ENCODE measurements at regions of chr3 and their contacts with region 1.

Region 1: GRCh38 chr3:156674046-156674910 is at the start of gene TIPARP:
- DNase-seq: peak; percentile 92
- ATAC-seq: peak; percentile 92
- H3K4me3 ChIP-seq: peak within 1 kb of the TSS; percentile 76 to 96 (median 82)
- H3K27ac ChIP-seq: peak within 1 kb of the TSS; percentile 89
- H3K4me1 ChIP-seq: peaks cover 44% of the 10 kb centered on the region
- H3K27me3 ChIP-seq: no peaks in the 10 kb centered on the region
- CTCF ChIP-seq: peak; percentile 90
- EP300 ChIP-seq: peak in 1 of 2 experiments; percentile 14; a peak in 1 of 4 replicates
- POLR2A ChIP-seq: peak; percentile 98 to 99
- RAD21 ChIP-seq: peak; percentile 92
- total RNA-seq, gene TIPARP: 19.7 and 25.4 TPM in 2 replicates

Region 2: DNA sequence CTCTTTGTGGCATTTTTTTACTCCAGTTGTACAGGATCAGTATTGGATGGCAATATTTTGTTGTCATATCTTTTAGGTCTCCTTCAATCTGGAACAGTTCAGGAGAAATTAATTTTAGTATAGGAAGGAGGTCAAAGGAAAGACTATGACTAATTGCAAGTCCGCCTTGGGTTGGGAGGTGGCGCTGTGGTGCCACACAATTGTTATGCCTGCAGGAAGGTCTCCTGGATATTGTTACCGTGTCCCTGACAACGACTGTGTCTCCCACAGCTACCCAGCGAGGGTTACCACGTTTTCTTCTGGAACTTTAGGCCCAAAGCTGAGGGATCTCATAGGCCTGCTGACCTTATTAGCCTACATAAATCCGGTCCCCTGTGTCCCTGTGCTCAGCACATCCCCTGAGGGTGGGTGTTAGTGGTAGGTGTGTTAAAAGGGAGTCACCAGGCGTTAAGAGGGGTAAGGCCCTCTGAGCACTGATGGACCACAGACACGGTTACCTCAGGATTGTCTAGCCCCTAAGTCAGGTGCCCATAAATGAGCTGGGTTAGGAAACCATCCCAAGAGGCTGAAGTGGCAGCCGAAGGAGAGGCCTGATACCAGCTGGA is 522.4 kb before region 1 on chr3:
- CTCF ChIA-PET with region 1: no interaction called
- POLR2A ChIA-PET with region 1: no interaction called
- in situ Hi-C with region 1: no loop called
- intact Hi-C with region 1: loop called (anchors 10 kb)
- DNase-seq: peak; percentile 35
- ATAC-seq: peak; percentile 93
- H3K4me3 ChIP-seq: no peak overlapping the region
- H3K27ac ChIP-seq: no peak overlapping the region
- H3K4me1 ChIP-seq: no peaks in the 10 kb centered on the region
- H3K27me3 ChIP-seq: no peaks in the 10 kb centered on the region
- CTCF ChIP-seq: peak; percentile 85
- EP300 ChIP-seq: no peak
- POLR2A ChIP-seq: no peak
- RAD21 ChIP-seq: peak; percentile 76

Region 3: DNA sequence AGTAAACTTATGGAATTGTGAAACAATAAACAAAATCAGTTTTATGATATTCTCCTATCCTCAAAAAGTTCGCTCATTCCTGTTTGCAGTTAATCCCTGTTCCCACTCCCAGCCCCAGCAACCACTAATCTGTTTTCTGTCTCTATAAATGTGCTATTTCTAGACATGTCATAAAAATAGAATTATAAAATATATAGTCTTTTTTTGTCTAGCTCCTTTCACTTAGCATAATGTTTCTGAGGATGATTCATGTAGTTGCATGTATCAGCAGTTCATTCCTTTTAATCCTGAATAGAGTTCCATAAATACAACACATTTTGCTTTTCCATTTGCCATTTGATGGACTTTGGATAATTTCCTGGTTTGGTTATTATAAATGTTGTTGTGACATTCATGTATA is 413.9 kb before region 1 on chr3:
- CTCF ChIA-PET with region 1: no interaction called
- POLR2A ChIA-PET with region 1: no interaction called
- in situ Hi-C with region 1: no loop called
- intact Hi-C with region 1: no loop called
- DNase-seq: no peak
- ATAC-seq: no peak
- H3K4me3 ChIP-seq: no peak overlapping the region
- H3K27ac ChIP-seq: no peak overlapping the region
- H3K4me1 ChIP-seq: no peaks in the 10 kb centered on the region
- H3K27me3 ChIP-seq: no peaks in the 10 kb centered on the region
- CTCF ChIP-seq: no peak
- EP300 ChIP-seq: no peak
- POLR2A ChIP-seq: no peak
- RAD21 ChIP-seq: no peak

Region 4: GRCh38 chr3:156727519-156728205 is 53.4 kb after region 1 on chr3:
- CTCF ChIA-PET with region 1: no interaction called
- POLR2A ChIA-PET with region 1: no interaction called
- in situ Hi-C with region 1: no loop called
- intact Hi-C with region 1: loop called (anchors 2 kb)
- DNase-seq: no peak
- ATAC-seq: peak; percentile 8
- H3K4me3 ChIP-seq: no peak overlapping the region
- H3K27ac ChIP-seq: peak overlapping the region; percentile 67
- H3K4me1 ChIP-seq: peaks cover 53% of the 10 kb centered on the region
- H3K27me3 ChIP-seq: no peaks in the 10 kb centered on the region
- CTCF ChIP-seq: no peak
- EP300 ChIP-seq: no peak
- POLR2A ChIP-seq: no peak
- RAD21 ChIP-seq: no peak

Region 5: DNA sequence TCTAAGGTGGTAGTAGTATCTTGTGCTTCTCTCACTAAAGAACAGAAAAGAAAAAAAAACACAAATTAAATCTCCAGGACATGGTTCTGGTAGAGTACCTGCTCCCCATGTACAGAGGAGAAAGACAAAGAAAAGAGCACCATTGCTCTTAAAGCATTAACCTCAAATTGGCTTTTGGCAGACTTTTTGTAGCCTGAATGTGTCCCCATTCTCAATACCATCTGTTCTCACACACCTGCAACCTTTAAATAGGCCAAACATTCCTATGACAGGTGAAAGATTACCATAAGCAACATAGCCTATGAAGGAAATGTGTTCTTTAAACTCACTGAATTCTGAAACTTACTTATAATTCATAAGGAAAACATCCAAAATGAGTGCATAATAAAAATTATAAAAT is 68.1 kb after region 1 on chr3:
- CTCF ChIA-PET with region 1: no interaction called
- POLR2A ChIA-PET with region 1: no interaction called
- in situ Hi-C with region 1: no loop called
- intact Hi-C with region 1: no loop called
- DNase-seq: no peak
- ATAC-seq: no peak
- H3K4me3 ChIP-seq: no peak overlapping the region
- H3K27ac ChIP-seq: no peak overlapping the region
- H3K4me1 ChIP-seq: peaks cover 23% of the 10 kb centered on the region
- H3K27me3 ChIP-seq: no peaks in the 10 kb centered on the region
- CTCF ChIP-seq: no peak
- EP300 ChIP-seq: no peak
- POLR2A ChIP-seq: no peak
- RAD21 ChIP-seq: no peak

Region 6: GRCh38 chr3:157081681-157082210 is 407.5 kb after region 1 on chr3:
- CTCF ChIA-PET with region 1: no interaction called
- POLR2A ChIA-PET with region 1: interaction called, 4 read pairs
- in situ Hi-C with region 1: loop called (anchors 10 kb)
- intact Hi-C with region 1: loop called (anchors 2 kb)
- DNase-seq: peak; percentile 68
- ATAC-seq: peak; percentile 83
- H3K4me3 ChIP-seq: peak overlapping the region in 1 of 3 experiments; percentile 36; a peak in 1 of 6 replicates
- H3K27ac ChIP-seq: no peak overlapping the region
- H3K4me1 ChIP-seq: peaks cover 27% of the 10 kb centered on the region
- H3K27me3 ChIP-seq: no peaks in the 10 kb centered on the region
- CTCF ChIP-seq: peak; percentile 97
- EP300 ChIP-seq: no peak; a peak in 1 of 4 replicates
- POLR2A ChIP-seq: no peak
- RAD21 ChIP-seq: peak; percentile 96

Region 7: GRCh38 chr3:157174649-157175498 is 500.6 kb after region 1 on chr3:
- CTCF ChIA-PET with region 1: no interaction called
- POLR2A ChIA-PET with region 1: interaction called, 14 read pairs
- in situ Hi-C with region 1: no loop called
- intact Hi-C with region 1: no loop called
- DNase-seq: peak; percentile 98
- ATAC-seq: peak; percentile 95
- H3K4me3 ChIP-seq: peak overlapping the region; percentile 74 to 88 (median 74)
- H3K27ac ChIP-seq: peak overlapping the region; percentile 88
- H3K4me1 ChIP-seq: peaks cover 35% of the 10 kb centered on the region
- H3K27me3 ChIP-seq: no peaks in the 10 kb centered on the region; a peak in 1 of 5 replicates
- CTCF ChIP-seq: no peak; the same call in 1 of the 2 replicates
- EP300 ChIP-seq: peak; percentile 24 to 56; a peak in 3 of 4 replicates
- POLR2A ChIP-seq: peak; percentile 92 to 93
- RAD21 ChIP-seq: peak; percentile 37; the same call in 1 of the 2 replicates